AG04449 (cell line): ENCODE measurements at regions of chr2 and their contacts with region 1.

Region 1: DNA sequence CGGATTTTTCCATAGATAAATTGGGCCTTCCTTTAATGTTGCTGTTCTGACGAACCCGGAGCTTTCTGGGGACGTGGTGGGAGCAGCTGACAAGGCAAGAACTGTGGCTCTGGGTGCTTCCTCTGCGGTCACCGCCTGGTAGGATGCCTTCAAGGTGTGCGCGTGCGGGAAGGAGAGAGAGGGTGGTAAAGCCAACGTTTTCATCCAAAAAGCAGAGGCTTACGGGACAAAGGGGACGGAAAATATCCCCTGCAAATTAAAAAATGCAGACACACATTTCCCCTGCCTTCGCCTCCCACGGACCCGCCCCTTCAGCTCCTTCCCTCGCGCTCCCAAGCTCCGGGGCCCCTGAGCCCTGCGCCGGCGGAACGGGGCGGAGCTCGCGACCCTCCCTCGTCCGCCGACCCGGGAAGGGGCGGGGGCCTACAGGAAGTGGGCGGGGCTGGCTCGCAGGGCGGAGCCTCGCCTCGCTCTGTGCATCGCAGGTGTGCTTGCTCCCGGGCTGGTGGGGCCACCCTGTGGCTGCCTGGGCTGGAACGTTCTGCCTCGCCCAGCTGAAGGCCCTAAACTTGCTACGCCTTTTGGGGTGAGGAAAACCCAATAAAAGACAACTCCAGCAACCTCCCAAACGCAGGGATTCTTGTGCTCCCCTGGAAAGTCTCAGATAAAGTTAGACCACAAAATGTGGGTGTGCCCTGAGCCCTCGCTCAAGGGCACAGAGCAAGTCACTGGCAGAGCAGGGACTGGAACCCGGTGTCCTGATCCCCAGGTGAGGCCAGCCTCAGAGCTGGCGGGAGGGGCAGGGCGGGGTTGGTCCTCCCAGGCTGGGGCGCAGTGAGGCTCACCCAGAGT is 25.4 kb upstream of the SLC66A3 start:
- DNase-seq: no peak
- H3K4me3 ChIP-seq: peak overlapping the region; percentile 39
- CTCF ChIP-seq: no peak

Region 2: GRCh38 chr2:10721396-10722251 is 408.2 kb before region 1 on chr2 and contains the start of gene ATP6V1C2:
- CTCF ChIA-PET with region 1: no interaction called
- POLR2A ChIA-PET with region 1: no interaction called
- DNase-seq: no peak
- H3K4me3 ChIP-seq: peak within 1 kb of the TSS; percentile 15; the same call in 1 of the 2 replicates
- CTCF ChIP-seq: no peak

Region 3: DNA sequence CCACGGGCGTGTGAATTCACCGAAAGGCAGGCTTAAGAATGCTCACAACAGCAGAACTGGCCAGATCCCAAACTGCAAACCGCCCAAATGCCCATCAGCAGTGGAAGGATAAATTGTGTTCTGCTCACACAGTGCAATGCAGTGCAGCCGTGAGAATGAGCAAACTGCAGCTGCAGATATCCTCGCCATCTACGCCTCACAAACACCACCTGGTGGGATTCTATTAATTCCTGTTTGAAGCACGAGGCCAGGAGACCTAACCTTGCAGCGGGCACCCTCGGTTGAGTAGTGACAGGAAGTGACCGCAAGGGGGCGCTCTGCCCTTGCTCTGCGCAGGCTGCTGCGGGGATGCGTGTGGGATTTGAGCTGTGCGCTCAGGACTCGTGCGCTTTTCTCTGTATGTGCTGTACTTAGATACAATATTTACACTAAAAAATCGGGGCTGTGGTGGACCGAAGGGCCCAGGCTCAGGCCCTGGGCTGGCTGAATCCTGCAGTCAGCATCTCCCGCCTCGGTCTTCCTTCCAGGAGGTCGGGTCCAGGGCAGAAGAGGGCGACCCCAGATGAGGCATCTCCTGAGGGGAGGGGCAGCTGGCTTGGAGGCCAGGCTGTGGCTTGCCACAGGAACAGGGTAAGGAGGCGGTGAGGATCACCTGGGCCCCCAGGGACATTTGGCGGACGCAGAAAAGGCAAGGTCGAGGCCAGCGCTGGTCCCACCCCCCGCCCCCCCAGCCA is 297.5 kb before region 1 on chr2:
- CTCF ChIA-PET with region 1: interaction called, 609 read pairs
- POLR2A ChIA-PET with region 1: interaction called, 3 read pairs
- DNase-seq: peak; percentile 7
- H3K4me3 ChIP-seq: no peak overlapping the region
- CTCF ChIP-seq: peak; percentile 96

Region 4: GRCh38 chr2:11154923-11155380 is 25.1 kb after region 1 on chr2:
- CTCF ChIA-PET with region 1: interaction called, 18 read pairs
- POLR2A ChIA-PET with region 1: interaction called, 8 read pairs
- DNase-seq: peak; percentile 55
- H3K4me3 ChIP-seq: peak overlapping the region; percentile 67
- CTCF ChIP-seq: no peak

Region 5: DNA sequence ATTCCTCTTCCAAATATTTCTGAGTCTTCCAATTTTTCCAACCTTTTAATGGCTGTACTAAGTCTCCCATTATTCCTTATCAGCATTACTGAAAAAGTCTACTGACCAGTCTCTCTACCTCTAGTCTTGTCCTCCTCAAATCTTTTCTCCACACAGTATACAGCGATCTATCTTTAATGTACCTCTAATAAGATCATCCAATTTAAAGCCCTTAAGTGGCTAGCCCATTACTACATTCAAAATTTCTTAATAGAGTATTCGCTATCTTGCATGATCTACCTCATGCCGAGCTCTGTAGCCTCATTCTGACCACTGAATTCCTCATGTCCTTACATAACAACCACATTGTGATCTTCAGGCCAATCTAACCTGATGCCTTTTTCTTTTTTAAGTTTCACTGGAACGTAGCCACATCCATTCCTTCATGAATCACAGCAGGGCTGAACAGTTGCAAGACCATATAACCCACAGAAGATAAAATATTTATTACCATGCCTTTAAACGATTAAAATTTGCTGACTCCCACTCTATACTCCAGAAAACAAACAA is 83.3 kb after region 1 on chr2:
- CTCF ChIA-PET with region 1: interaction called, 20 read pairs
- POLR2A ChIA-PET with region 1: no interaction called
- DNase-seq: no peak
- H3K4me3 ChIP-seq: no peak overlapping the region
- CTCF ChIP-seq: no peak

Region 6: DNA sequence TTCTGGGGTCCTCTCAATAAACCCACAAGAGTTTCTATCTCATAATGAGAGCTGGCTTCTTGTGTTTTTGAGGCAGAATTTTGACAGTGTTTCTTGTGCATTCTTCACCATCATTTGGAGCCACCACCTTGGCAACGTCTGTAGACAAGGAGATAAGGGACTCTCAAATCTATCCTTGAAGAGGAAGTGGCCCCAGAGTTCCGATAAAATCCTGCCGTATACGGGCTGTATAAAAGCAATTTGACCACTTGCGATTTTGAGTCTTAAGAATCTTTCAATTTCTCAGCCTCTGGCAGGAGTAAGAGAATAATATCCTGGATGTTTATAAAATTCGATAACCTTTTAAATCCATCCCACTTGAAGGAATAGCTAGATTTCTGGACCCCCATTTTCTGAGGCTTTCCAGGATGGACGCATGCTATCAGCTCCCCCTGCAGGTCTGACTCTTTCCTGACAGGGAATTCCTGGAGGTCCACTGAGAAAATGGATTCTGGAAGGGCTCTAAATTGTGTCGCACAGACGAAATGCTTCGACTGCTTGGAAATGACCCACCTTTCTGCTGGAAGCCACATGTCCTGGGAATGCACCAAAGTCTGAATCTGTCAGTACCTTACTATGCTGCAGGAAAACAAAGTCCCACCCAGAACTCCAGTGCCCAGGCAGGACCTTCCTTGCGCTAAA is 282.1 kb after region 1 on chr2:
- CTCF ChIA-PET with region 1: interaction called, 69 read pairs
- POLR2A ChIA-PET with region 1: no interaction called
- DNase-seq: no peak
- H3K4me3 ChIP-seq: no peak overlapping the region; the same call in 1 of the 2 replicates
- CTCF ChIP-seq: peak; percentile 72

Region 7: DNA sequence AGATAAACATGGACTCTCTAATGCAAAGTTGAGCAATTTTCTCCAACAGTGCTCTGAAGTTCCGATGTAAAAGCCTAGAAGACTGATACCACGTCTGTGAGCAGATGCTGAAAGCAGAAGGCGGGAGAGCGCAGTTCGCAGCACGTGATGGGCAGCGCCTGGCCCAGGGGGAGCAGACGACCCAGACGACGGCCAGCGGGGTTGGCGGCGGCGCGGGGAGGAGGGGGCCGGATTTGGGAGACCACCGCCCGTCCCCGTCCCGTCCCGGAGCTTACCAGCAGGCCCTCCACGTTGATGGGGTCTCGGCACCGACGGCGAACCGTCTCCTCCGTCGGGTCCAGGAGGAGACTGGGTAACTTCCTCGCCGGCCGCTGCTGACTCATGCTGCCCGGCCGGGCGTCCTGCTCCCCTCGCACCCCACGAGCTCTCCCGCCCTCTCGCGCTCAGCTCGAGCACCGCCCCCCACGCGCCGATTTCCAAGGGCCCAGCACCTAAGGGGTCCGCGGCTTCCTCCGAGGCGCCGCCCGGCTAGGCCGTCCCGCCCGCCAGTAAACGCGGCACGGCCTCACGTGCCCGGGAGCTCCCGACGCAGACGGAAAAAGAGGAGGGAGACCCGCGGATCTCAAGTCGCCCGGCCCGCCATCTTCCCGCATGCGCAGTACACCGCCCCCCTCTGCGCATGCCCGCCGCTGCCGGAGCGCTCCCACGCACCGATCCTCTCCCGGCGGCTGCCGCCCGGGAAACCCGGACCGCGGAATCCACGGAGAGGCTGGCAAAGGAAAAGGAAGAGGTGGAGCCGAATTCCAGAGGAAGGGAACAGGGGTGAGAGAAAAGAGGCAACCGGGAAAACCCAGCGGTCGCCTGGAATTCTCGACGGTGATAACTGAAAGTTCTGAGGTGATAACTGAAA is 335.9 kb after region 1 on chr2 and contains the start of gene E2F6:
- CTCF ChIA-PET with region 1: interaction called, 19 read pairs
- POLR2A ChIA-PET with region 1: no interaction called
- DNase-seq: peak; percentile 49
- H3K4me3 ChIP-seq: peak within 1 kb of the TSS; percentile 74
- CTCF ChIP-seq: no peak